Psoas muscle (tissue), 8 donors: ENCODE measurements at regions of chr1 and their contacts with region 1.

Region 1: GRCh38 chr1:15714406-15715136 is 21.5 kb upstream of the SLC25A34 start:
- DNase-seq: peak in 1 of 2 donors; percentile 73
- ATAC-seq: peak; percentile 70 to 80 (median 76)
- H3K4me3 ChIP-seq: no peak overlapping the region
- H3K27ac ChIP-seq: peak overlapping the region; percentile 94
- H3K4me1 ChIP-seq: peaks cover 80% of the 10 kb centered on the region
- H3K27me3 ChIP-seq: no peaks in the 10 kb centered on the region
- CTCF ChIP-seq: no peak

Region 2: DNA sequence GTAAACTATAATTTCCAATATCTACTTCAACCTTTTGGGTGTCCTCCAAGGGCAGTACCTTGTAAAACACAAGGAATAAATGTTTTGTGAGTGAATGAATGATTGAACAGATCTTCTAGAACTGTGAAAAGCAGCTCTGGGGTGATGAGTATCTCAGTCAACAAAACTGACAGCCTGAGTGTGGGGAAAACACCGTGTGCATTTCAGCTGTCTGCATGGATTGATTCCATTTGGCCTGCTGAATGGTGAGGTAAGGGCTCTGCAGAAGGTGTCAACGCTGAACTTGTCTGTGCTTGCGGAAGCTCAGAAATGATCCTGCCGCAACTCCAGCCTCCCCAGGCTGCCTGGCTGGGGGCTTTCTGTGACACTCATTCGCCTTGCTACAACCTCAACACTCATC is 122.3 kb before region 1 on chr1:
- intact Hi-C with region 1: loop called in 1 of 2 experiments (anchors 5 kb)
- DNase-seq: no peak
- ATAC-seq: peak; percentile 83 to 92 (median 88)
- H3K4me3 ChIP-seq: no peak overlapping the region
- H3K27ac ChIP-seq: peak overlapping the region; percentile 89
- H3K4me1 ChIP-seq: peaks cover 17% of the 10 kb centered on the region
- H3K27me3 ChIP-seq: no peaks in the 10 kb centered on the region
- CTCF ChIP-seq: no peak

Region 3: GRCh38 chr1:15810073-15810472 is 95.5 kb after region 1 on chr1:
- intact Hi-C with region 1: no loop called
- DNase-seq: no peak
- ATAC-seq: peak in 1 of 4 donors; percentile 35
- H3K4me3 ChIP-seq: no peak overlapping the region
- H3K27ac ChIP-seq: no peak overlapping the region
- H3K4me1 ChIP-seq: no peaks in the 10 kb centered on the region
- H3K27me3 ChIP-seq: no peaks in the 10 kb centered on the region
- CTCF ChIP-seq: no peak